A673 (cell line): ENCODE measurements at regions of chr16 and their contacts with region 1.

Region 1: GRCh38 chr16:31094424-31095120 is at the start of gene VKORC1:
- DNase-seq: peak; percentile 98
- H3K4me3 ChIP-seq: peak within 1 kb of the TSS; percentile 73
- H3K27ac ChIP-seq: peak within 1 kb of the TSS; percentile 79
- H3K4me1 ChIP-seq: peaks cover 3% of the 10 kb centered on the region
- H3K27me3 ChIP-seq: no peaks in the 10 kb centered on the region
- CTCF ChIP-seq: no peak
- total RNA-seq, gene VKORC1: 85.0 and 98.3 TPM in 2 replicates

Region 2: DNA sequence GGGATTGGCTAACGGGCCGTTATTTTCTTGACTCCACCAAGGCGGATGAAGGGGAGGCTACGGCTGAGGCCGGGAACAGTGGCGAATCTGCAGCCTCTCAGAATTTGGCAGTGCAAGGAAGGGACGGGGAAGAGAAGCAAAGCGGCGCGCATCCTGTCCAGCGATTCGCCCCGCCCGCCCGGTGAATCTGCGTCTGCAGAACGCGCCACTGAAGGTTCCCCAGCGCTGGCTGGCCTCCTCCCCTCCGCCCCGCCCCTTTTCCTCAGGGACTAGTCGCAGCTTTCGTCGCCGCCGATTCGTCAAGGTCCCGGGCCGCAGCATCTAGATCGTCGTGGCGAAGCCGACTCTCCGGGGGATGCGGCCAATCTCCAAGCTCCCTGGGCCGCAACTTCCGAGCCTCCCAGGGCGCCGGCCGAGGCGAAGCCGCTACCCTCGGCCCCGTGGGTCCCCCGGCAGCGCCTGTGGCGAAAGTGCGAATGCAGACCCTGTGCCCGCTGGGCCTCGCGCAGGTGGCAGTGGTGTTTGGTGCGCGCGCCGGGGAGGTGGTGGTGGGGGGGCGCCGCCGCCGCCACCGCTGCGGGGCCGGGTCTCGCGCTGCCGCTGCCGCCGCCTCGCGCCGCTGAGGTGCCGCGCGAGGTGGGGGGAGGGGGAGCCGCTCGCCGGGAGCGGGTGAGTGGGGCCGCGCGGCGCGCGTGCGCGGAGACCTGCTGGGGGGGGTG is 137.0 kb before region 1 on chr16 and contains the start of gene SETD1A:
- CTCF ChIA-PET with region 1: no interaction called
- POLR2A ChIA-PET with region 1: no interaction called
- intact Hi-C with region 1: loop called (anchors 10 kb)
- DNase-seq: peak; percentile 98
- H3K4me3 ChIP-seq: peak within 1 kb of the TSS; percentile 80
- H3K27ac ChIP-seq: peak within 1 kb of the TSS; percentile 99
- H3K4me1 ChIP-seq: peaks cover 10% of the 10 kb centered on the region
- H3K27me3 ChIP-seq: no peaks in the 10 kb centered on the region
- CTCF ChIP-seq: no peak
- total RNA-seq, gene SETD1A: 31.4 and 37.1 TPM in 2 replicates

Region 3: GRCh38 chr16:30984669-30985400 is 109.7 kb before region 1 on chr16 and contains the start of gene HSD3B7:
- CTCF ChIA-PET with region 1: no interaction called
- POLR2A ChIA-PET with region 1: interaction called, 3 read pairs
- intact Hi-C with region 1: loop called (anchors 2 kb)
- DNase-seq: peak; percentile 85
- H3K4me3 ChIP-seq: no peak within 1 kb of the TSS
- H3K27ac ChIP-seq: no peak within 1 kb of the TSS
- H3K4me1 ChIP-seq: no peaks in the 10 kb centered on the region
- H3K27me3 ChIP-seq: no peaks in the 10 kb centered on the region
- CTCF ChIP-seq: peak; percentile 97
- total RNA-seq, gene HSD3B7: 0.85 and 0.95 TPM in 2 replicates

Region 4: GRCh38 chr16:31073968-31074813 is 20.4 kb before region 1 on chr16 and contains the starts of genes ZNF646 and ZNF668:
- CTCF ChIA-PET with region 1: no interaction called
- POLR2A ChIA-PET with region 1: no interaction called
- intact Hi-C with region 1: loop called (anchors 1 kb)
- DNase-seq: peak; percentile 100
- H3K4me3 ChIP-seq: peak within 1 kb of the TSS; percentile 89
- H3K27ac ChIP-seq: peak within 1 kb of the TSS; percentile 99
- H3K4me1 ChIP-seq: peaks cover 19% of the 10 kb centered on the region
- H3K27me3 ChIP-seq: no peaks in the 10 kb centered on the region
- CTCF ChIP-seq: no peak
- total RNA-seq, gene ZNF646: 26.6 and 27.9 TPM in 2 replicates
- total RNA-seq, gene ZNF668: 16.5 and 19.8 TPM in 2 replicates

Region 5: DNA sequence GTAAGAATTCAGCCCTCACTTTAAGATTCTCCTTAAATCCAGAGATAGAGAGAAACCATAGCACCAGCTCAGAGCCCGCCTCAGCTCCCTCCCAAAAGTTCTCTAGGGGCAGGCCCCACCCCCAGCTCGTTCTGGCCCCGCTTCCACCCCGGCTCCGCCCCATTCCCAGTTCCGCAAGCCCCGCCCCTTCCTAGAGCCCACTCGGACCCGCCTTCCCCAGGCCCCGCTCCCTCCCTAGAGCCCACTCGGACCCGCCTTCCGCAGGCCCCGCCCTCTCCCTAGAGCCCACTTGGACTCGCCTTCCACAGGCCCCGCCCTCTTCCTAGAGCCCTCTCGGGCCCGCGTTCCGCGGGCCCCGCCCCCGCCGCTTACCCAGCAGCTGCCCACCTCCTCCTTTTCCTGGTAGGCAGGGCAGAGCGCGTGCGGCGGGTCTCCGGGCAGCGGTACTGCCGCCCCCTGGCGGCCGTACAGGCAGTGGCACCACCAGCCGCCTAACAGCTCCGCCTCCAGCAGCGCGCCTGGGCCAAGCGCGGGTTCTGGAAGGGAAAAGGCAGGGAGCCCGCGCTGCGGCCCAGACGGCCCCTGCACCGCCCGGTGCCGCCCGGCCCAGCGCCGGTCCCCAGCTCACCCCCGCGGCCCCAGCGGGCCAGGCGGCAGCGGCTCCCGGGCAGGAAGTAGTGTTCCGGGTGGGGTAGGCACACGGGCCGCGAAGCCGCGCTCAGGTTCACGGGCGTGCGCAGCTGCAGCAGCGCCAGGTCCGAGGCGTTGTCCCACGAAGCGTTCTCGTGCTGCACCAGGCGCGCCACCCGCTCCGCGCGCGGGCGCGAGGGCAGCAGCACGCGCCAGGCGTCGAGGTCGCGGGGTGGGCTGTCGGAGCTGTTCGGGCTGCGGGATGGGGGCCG is 47.8 kb after region 1 on chr16:
- CTCF ChIA-PET with region 1: no interaction called
- POLR2A ChIA-PET with region 1: no interaction called
- intact Hi-C with region 1: no loop called
- DNase-seq: peak; percentile 99
- H3K4me3 ChIP-seq: peak overlapping the region; percentile 45
- H3K27ac ChIP-seq: peak overlapping the region; percentile 75
- H3K4me1 ChIP-seq: peaks cover 11% of the 10 kb centered on the region
- H3K27me3 ChIP-seq: no peaks in the 10 kb centered on the region
- CTCF ChIP-seq: peak; percentile 97